Left colon (tissue), 2 donors: ENCODE measurements at regions of chr3 and their contacts with region 1.

Region 1: DNA sequence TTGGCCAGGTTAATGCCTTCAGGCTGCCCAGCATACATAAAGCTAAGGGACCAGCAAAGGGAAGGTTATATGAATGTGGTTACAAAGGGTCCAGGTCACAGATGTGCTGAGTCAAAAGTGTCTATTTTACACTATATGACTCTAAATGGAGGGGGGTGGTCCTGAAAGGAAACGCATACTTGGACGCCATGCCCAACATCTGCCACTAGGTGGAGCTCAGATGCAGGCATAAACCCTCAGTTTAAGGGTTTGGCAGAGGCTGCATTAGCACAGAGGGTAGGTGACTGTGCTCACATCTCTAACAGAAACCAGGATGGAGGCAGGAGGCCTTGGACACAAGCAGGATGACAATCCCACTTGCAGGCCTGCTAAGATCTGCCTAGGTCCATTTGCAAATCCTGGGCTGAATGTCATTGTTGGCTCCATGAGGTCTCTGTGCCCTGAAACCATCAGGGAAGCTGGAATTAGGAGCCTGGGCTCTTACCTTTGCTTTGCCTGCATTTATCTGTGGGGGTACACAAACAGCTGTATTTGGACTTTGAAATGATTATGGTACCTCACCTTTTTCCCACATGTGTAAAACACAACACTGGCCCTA is 55.8 kb downstream of the ZNF621 start:
- DNase-seq: peak in 1 of 2 donors; percentile 64
- ATAC-seq: peak; percentile 73

Region 2: GRCh38 chr3:40258555-40258954 is 322.0 kb before region 1 on chr3:
- intact Hi-C with region 1: no loop called
- DNase-seq: no peak
- ATAC-seq: no peak

Region 3: DNA sequence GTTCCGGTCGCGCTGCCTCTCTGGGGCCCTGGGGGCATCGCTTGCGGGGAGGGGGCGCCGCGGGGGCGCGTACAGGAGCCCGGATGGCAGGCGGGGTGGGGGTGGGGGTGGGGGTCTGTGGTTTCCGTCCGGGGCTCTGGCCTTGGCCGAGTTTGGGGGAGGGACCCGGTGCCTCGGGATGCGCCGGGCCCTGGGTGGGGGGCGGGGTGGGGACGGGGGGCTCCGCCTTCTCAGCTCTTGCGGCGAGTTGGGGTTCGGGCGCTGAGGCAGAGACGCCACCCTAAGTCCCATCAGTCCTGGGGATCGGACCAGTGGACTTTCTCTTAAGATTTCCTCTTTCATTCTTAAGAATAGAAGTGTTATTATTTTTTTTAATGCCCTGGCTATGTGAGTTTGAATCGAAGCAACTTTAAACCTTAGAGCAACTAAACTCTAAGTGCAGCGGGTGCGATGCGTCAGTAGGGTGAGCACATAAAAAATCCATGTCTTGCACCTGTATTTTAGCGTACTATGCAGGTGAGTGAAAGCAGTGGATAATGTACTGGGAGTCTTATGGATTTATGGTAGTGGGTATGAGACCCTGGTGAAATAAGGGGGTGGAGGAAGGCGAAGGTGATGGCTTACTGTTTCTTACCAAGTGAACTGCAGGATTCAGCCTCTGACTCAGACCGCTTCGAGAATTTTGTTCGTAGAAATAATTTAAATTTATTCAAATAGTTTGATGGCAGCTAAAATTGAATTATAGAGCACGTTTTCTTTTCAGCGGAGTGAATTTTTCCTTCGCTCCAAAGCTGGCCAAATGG is 619.5 kb after region 1 on chr3:
- intact Hi-C with region 1: loop called in 1 of 2 experiments (anchors 10 kb)
- DNase-seq: peak in 1 of 2 donors; percentile 39
- ATAC-seq: peak; percentile 9

Region 4: DNA sequence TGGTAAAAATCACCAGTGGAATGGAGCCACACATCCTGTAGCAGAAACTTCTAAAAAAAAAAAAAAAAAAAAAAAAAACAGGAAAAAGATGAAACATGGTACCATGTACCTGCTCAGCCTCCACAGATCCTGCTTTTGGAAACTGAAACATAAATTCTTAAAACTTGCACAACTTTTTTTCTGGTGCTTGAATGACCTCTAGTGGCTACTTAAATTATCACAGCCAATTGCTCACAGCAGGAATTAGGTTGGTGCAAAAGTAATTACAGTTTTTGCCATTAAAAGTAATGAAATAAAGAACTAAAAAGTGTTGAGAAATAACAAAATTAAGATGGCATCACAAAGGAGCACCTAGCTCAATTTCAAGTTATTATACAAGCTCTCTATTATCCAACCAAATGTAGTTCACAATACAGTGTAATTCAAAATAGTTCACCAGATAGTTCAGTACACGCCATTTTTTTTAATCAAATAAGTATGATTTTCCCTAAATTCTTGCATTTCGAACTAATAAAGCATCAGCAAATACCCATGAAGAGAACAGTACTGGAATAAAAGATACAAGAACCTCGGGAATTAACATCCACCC is 1300.7 kb after region 1 on chr3:
- intact Hi-C with region 1: loop called (anchors 5 to 10 kb)
- DNase-seq: no peak
- ATAC-seq: no peak